AG04449 (cell line): ENCODE measurements at regions of chr1 and their contacts with region 1.

Region 1: GRCh38 chr1:200979574-200980451 is 43.7 kb downstream of the KIF21B start:
- DNase-seq: no peak
- H3K4me3 ChIP-seq: no peak overlapping the region
- CTCF ChIP-seq: peak; percentile 51

Region 2: DNA sequence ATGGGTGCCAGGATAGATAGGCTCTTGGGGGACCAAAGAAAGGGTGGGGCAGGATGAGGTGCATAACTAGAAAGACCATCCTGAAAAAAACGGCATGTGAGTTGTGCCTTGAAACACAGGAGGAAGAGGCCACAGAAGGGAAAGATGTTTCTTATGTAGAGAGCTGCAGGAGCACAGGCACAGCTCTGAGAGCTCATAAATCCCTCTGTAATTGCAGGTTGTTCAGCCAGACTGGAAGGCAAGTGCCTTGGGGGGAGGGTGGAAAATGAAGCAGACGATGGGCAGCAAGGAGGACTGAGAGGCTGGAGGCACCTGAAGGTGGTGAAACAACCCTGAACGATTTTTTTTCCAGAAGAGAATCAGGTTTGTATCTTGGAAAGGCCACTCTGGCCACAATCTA is 781.6 kb before region 1 on chr1:
- CTCF ChIA-PET with region 1: no interaction called
- POLR2A ChIA-PET with region 1: no interaction called
- DNase-seq: no peak
- H3K4me3 ChIP-seq: no peak overlapping the region
- CTCF ChIP-seq: no peak

Region 3: DNA sequence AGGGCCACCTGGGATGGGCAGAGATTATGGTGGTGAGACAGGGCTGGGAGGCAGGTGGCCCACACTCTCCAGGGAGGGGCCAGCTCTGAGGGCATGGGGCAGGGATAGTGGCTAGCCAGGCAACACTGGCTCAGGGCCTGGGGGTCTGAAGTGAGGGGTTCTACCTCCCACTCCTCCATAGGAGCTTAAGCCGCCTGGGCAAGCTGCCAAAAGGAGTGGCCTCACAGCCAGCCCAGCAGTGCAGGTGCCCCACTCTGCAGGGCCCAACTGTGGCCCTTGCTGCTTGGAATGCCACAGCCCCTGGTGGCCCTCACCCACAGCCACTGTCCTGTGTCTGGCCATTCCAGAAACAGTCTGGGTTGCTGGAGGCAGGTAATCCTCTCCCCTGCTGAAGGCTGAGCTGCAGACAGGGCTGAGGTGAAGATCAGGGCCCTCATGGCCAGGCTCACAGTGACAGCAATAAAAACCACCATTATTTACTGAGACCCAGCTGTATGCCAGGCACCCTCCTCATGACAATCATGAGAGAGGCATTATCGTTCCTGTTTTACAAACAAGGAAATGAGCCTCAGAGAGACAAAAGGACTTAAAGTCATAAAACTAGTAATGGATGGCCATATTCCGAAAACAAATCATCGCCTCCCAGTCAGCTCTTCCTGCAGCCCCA is 12.7 kb after region 1 on chr1:
- CTCF ChIA-PET with region 1: interaction called, 141 read pairs
- POLR2A ChIA-PET with region 1: no interaction called
- DNase-seq: no peak
- H3K4me3 ChIP-seq: no peak overlapping the region
- CTCF ChIP-seq: no peak

Region 4: DNA sequence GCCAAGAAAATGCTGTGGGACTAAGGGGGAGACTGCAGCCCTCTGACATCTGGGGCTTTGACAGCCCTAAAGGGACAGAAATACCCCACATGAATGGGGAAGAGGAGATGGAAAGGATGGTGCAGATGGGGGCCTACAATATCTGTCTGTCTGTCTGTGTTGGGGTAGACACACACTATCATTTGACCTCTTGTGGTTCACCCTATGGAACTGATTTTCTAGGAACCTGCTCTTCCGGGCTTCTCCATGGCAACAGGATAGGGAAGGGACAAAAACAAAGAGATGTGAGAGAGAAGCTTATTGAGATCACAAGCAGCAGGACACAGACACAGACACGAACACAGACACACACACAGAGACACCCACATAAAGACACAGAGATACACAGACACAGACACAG is 26.6 kb after region 1 on chr1:
- CTCF ChIA-PET with region 1: no interaction called
- POLR2A ChIA-PET with region 1: no interaction called
- DNase-seq: no peak
- H3K4me3 ChIP-seq: no peak overlapping the region
- CTCF ChIP-seq: no peak